Activated naive CD4-positive, alpha-beta T cell treated with anti-CD3 and anti-CD28 coated beads for 36 hours (primary cell): ENCODE measurements at regions of chr12 and their contacts with region 1.

Region 1: GRCh38 chr12:47397664-47398281 is 308.1 kb downstream of the RPAP3 start:
- DNase-seq: peak; percentile 72
- H3K4me3 Mint-ChIP-seq: peak overlapping the region; percentile 33
- H3K27ac Mint-ChIP-seq: peak overlapping the region; percentile 100
- H3K4me1 Mint-ChIP-seq: peaks cover 95% of the 10 kb centered on the region
- H3K27me3 Mint-ChIP-seq: no peaks in the 10 kb centered on the region

Region 2: DNA sequence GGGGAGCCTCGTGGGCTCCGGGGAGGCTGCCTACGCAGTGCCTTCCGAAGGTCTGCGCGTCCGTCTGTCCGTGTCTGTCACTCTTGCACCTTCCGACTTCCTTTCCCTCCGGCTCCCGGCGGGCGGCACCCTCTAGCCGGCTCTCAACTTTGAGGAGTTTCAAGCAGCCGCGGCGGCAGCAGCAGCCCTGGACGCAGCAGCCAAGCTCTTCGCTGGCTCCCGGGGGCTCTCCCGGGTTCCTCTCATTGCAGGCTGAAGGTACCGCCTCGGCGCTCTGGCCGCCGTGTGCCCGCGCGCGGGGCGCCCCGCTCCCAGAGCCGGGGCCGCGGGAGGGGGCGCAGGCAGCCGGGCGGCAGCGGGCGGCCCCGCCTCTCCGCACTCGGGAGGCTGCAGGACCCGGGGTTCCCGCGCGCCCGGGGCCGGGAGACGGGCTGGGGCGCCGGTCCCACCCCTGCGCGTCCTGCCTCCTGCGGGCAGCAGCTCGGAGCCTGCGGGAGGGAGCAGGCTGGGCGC is 318.2 kb before region 1 on chr12 and contains the starts of genes AMIGO2 and PCED1B:
- CTCF ChIA-PET with region 1: interaction called, 6 read pairs
- intact Hi-C with region 1: loop called (anchors 1 kb)
- DNase-seq: peak; percentile 88
- H3K4me3 Mint-ChIP-seq: peak within 1 kb of the TSS; percentile 95
- H3K27ac Mint-ChIP-seq: peak within 1 kb of the TSS; percentile 94
- H3K4me1 Mint-ChIP-seq: peaks cover 69% of the 10 kb centered on the region
- H3K27me3 Mint-ChIP-seq: no peaks in the 10 kb centered on the region
- total RNA-seq, gene AMIGO2: 19.2 to 19.6 TPM
- total RNA-seq, gene PCED1B: 138 to 143 TPM

Region 3: GRCh38 chr12:47190271-47190750 is 207.5 kb before region 1 on chr12:
- CTCF ChIA-PET with region 1: interaction called, 5 read pairs
- intact Hi-C with region 1: loop called (anchors 1 kb)
- DNase-seq: peak; percentile 75
- H3K4me3 Mint-ChIP-seq: peak overlapping the region; percentile 48
- H3K27ac Mint-ChIP-seq: peak overlapping the region; percentile 92
- H3K4me1 Mint-ChIP-seq: peaks cover 88% of the 10 kb centered on the region
- H3K27me3 Mint-ChIP-seq: no peaks in the 10 kb centered on the region

Region 4: DNA sequence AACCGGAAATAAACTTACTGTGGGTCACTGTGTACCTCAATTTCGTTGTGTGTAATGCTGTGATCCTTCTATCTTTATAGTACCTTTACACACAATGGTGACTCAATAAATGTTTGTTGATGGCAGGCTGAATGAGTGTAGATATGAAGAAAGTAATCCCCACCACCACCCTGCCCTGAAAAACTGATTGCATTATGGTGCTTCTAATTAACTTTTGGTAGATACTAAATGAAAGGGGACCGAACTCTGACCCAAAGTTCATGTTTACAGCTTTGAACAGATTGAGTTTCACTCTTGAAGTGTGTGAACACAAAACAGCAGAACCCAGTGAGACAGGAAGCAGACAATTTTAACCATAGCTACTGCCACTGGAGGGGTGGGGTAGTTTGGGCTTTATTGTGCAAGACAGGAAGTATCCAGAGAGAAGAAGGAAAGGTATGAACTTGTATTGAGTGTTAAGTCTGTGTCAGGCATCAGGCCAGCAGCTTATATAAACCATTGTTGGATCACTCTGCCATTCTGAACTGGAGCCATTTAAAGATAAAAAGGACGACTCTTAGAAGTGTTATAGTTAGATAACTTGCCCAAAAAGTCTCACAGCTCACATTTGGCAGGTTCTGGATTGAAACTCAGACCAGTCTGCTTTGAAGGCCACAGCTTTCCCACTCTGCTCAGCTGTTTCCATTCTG is 121.0 kb before region 1 on chr12:
- CTCF ChIA-PET with region 1: interaction called, 12 read pairs
- intact Hi-C with region 1: loop called (anchors 1 kb)
- DNase-seq: peak; percentile 78
- H3K4me3 Mint-ChIP-seq: peak overlapping the region; percentile 30
- H3K27ac Mint-ChIP-seq: peak overlapping the region; percentile 88
- H3K4me1 Mint-ChIP-seq: peaks cover 86% of the 10 kb centered on the region
- H3K27me3 Mint-ChIP-seq: no peaks in the 10 kb centered on the region

Region 5: GRCh38 chr12:47356129-47356700 is 41.6 kb before region 1 on chr12:
- CTCF ChIA-PET with region 1: interaction called, 40 read pairs
- intact Hi-C with region 1: loop called (anchors 1 kb)
- DNase-seq: peak; percentile 72
- H3K4me3 Mint-ChIP-seq: peak overlapping the region; percentile 64
- H3K27ac Mint-ChIP-seq: peak overlapping the region; percentile 100
- H3K4me1 Mint-ChIP-seq: peaks cover 82% of the 10 kb centered on the region
- H3K27me3 Mint-ChIP-seq: no peaks in the 10 kb centered on the region

Region 6: GRCh38 chr12:47373554-47374150 is 24.1 kb before region 1 on chr12:
- CTCF ChIA-PET with region 1: no interaction called
- intact Hi-C with region 1: no loop called
- DNase-seq: no peak
- H3K4me3 Mint-ChIP-seq: no peak overlapping the region
- H3K27ac Mint-ChIP-seq: no peak overlapping the region
- H3K4me1 Mint-ChIP-seq: peaks cover 46% of the 10 kb centered on the region
- H3K27me3 Mint-ChIP-seq: no peaks in the 10 kb centered on the region

Region 7: DNA sequence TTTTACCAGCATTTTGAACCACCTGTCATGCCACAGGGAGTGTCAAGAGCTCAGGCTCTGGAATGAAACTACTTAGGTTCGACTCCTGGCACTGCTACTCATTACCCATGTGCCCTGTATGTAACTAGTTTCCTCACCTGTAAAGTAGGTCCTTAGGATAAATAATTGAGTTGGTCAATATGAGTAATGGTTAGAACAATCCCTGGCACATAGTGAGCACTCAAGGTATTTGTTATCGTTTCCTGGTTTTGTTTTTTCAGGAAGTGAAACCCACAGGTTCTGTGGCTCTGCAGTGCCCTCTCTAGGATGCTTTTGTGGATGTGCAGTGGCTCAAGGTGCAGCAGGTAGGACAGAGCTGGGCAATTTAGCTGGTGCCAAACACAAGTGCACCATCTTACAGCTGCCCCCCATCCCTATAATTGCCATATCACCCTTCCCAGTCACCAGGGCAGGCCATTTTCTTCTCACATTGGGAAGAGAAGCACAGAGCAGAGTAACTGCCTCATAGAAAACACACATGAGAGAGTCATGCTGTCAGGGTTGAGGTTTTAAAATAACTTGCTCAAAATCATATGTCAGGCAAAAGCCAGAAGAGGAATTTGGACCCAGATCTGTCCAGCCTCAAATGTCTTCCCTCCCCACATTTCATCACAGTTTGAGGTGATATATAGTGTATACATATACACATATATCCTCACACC is 10.5 kb after region 1 on chr12:
- CTCF ChIA-PET with region 1: interaction called, 24 read pairs
- intact Hi-C with region 1: no loop called
- DNase-seq: peak; percentile 73
- H3K4me3 Mint-ChIP-seq: no peak overlapping the region
- H3K27ac Mint-ChIP-seq: peak overlapping the region; percentile 60
- H3K4me1 Mint-ChIP-seq: peaks cover 76% of the 10 kb centered on the region
- H3K27me3 Mint-ChIP-seq: no peaks in the 10 kb centered on the region